CD8-positive, alpha-beta T cell (primary cell): ENCODE measurements at regions of chr20 and their contacts with region 1.

Region 1: DNA sequence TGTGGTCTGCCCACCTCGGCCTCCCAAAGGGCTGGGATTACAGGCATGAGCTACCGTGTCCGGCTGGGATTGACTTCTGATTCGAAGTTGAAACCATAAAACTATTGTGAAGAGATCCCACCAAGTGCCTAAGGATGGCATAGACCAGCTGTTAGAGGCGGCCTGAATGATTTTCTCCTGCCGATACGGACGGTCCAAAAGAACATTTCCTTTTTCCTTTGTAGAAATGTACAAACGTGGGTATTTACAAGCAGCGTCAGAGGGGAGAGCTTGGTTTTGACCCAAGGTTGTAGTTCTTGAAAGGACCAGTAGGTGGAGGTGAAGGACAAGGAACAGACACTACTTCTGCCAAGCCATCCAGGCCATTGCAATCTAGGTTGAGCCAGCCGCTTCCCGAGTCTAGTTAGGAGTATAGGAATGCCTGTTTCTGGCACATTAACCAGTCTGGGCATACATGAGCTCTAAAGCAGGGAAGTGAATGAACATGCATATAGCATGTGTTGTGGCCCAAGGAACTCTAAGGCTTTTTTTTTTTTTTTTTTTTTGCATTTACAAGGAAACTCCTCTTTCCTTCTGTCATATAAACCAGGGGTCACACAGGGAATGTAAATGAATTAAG is 29.1 kb downstream of the MOCS3 start:
- DNase-seq: peak; percentile 26 to 84 (median 51)
- ATAC-seq: peak; percentile 94
- H3K4me3 ChIP-seq: no peak overlapping the region
- H3K4me3 Mint-ChIP-seq: no peak overlapping the region
- H3K27ac ChIP-seq: no peak overlapping the region
- H3K27ac Mint-ChIP-seq: no peak overlapping the region
- H3K4me1 ChIP-seq: no peaks in the 10 kb centered on the region
- H3K4me1 Mint-ChIP-seq: peaks cover 2% of the 10 kb centered on the region
- H3K27me3 ChIP-seq: peaks cover 3 to 7% of the 10 kb centered on the region in 2 experiments
- H3K27me3 Mint-ChIP-seq: peaks cover 26% of the 10 kb centered on the region
- CTCF ChIP-seq: peak; percentile 94

Region 2: DNA sequence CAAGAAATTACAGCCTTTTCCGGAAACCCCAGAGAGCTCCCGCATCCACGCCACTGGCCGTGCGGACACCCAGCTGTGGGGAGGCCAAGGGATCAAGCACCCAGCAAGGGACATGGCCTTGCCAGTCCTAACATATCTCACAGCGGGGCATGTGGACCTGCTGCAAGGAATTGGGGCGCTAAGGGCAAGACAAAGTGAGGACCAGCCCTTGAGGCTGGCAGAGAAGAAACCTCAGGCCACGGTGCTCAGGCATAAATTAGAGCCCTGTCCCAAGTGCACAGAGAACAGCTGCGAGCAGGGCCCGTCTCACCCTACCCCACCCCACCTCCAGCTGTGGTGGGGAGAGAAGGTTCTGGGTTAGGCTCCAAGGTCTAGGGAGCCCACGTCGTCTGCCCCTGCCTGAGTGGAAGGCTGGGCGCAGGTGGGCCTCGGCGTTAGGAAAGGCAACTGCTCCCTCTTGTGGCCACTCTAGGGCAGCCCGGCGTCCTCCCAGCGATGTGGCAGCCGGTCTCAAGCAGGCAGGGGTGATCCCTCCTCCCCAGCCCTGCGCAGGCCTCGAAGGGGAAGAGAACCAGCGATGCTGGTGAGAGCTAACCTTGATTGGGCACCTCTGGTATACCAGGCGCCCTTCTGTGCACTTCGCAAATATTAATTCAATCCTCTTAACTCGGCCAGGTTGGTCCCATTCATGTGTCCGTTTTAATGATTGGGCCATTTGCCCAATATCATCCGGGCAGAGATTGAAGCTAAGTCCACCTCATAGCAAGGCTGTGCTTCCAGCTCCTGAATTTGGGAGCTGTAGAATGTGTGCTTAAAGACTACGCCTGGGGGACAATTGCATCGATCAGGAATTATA is 319.0 kb after region 1 on chr20:
- CTCF ChIA-PET with region 1: interaction called, 184 read pairs
- POLR2A ChIA-PET with region 1: interaction called, 5 read pairs
- intact Hi-C with region 1: loop called in 1 of 2 experiments (anchors 1 kb)
- DNase-seq: peak; percentile 47 to 82 (median 74)
- ATAC-seq: peak; percentile 90
- H3K4me3 ChIP-seq: no peak overlapping the region
- H3K4me3 Mint-ChIP-seq: no peak overlapping the region
- H3K27ac ChIP-seq: no peak overlapping the region
- H3K27ac Mint-ChIP-seq: no peak overlapping the region
- H3K4me1 ChIP-seq: no peaks in the 10 kb centered on the region
- H3K4me1 Mint-ChIP-seq: peaks cover 5% of the 10 kb centered on the region
- H3K27me3 ChIP-seq: peaks cover 0 to 2% of the 10 kb centered on the region in 2 experiments
- H3K27me3 Mint-ChIP-seq: peaks cover 12% of the 10 kb centered on the region
- CTCF ChIP-seq: peak; percentile 77

Region 3: DNA sequence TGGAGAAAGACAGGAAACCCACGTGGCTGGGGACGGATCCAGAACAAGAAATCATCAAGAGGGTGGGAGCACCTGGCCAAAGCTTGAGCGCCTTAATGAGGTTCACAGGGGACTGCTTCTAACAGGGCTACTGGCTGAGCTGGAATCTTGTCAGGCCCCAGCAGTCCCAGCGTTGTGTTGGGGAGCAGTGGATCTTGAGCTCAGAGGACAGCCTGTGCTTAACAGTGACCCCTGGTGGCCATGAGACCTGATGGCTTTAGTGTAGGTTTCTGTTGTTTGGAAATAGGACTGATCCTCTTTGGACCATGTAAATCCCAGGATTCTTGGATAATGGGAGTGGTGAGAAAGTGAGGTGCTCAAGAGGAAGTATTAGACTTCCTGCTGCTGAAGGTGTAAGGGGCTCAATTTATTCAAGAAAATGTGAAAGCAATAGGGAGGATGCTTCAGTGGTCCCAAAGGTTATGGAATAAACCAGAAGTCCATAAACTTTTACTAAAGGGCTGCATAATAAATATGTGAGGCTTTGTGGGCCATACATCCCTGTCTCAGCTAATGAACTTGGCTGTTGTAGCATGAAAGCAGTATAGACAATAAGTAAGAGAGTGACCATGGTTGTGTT is 338.6 kb after region 1 on chr20:
- CTCF ChIA-PET with region 1: interaction called, 9 read pairs
- POLR2A ChIA-PET with region 1: no interaction called
- intact Hi-C with region 1: loop called in 1 of 2 experiments (anchors 5 kb)
- DNase-seq: peak in 6 of 9 experiments; percentile 9 to 69 (median 50)
- ATAC-seq: no peak
- H3K4me3 ChIP-seq: no peak overlapping the region
- H3K4me3 Mint-ChIP-seq: no peak overlapping the region
- H3K27ac ChIP-seq: no peak overlapping the region
- H3K27ac Mint-ChIP-seq: no peak overlapping the region
- H3K4me1 ChIP-seq: no peaks in the 10 kb centered on the region
- H3K4me1 Mint-ChIP-seq: no peaks in the 10 kb centered on the region
- H3K27me3 ChIP-seq: no peaks in the 10 kb centered on the region
- H3K27me3 Mint-ChIP-seq: peaks cover 11% of the 10 kb centered on the region
- CTCF ChIP-seq: no peak

Region 4: GRCh38 chr20:52047811-52048764 is 1060.4 kb after region 1 on chr20:
- CTCF ChIA-PET with region 1: no interaction called
- POLR2A ChIA-PET with region 1: no interaction called
- intact Hi-C with region 1: no loop called
- DNase-seq: peak in 7 of 9 experiments; percentile 3 to 83 (median 17)
- ATAC-seq: peak; percentile 42
- H3K4me3 ChIP-seq: no peak overlapping the region
- H3K4me3 Mint-ChIP-seq: no peak overlapping the region
- H3K27ac ChIP-seq: no peak overlapping the region
- H3K27ac Mint-ChIP-seq: no peak overlapping the region
- H3K4me1 ChIP-seq: no peaks in the 10 kb centered on the region
- H3K4me1 Mint-ChIP-seq: peaks cover 14% of the 10 kb centered on the region
- H3K27me3 ChIP-seq: no peaks in the 10 kb centered on the region
- H3K27me3 Mint-ChIP-seq: no peaks in the 10 kb centered on the region
- CTCF ChIP-seq: no peak

Region 5: GRCh38 chr20:52083627-52084232 is 1096.0 kb after region 1 on chr20:
- CTCF ChIA-PET with region 1: no interaction called
- POLR2A ChIA-PET with region 1: no interaction called
- intact Hi-C with region 1: loop called in 1 of 2 experiments (anchors 10 kb)
- DNase-seq: peak in 7 of 9 experiments; percentile 10 to 68 (median 42)
- ATAC-seq: no peak
- H3K4me3 ChIP-seq: no peak overlapping the region
- H3K4me3 Mint-ChIP-seq: no peak overlapping the region
- H3K27ac ChIP-seq: no peak overlapping the region
- H3K27ac Mint-ChIP-seq: no peak overlapping the region
- H3K4me1 ChIP-seq: no peaks in the 10 kb centered on the region
- H3K4me1 Mint-ChIP-seq: peaks cover 13% of the 10 kb centered on the region
- H3K27me3 ChIP-seq: no peaks in the 10 kb centered on the region
- H3K27me3 Mint-ChIP-seq: no peaks in the 10 kb centered on the region
- CTCF ChIP-seq: peak; percentile 28